PC-3 (cell line): ENCODE measurements at regions of chr10 and their contacts with region 1.

Region 1: GRCh38 chr10:32437334-32437733 is 8.6 kb upstream of the CCDC7 start:
- DNase-seq: peak; percentile 49
- ATAC-seq: peak; percentile 88
- H3K4me3 ChIP-seq: no peak overlapping the region
- H3K27ac ChIP-seq: no peak overlapping the region
- H3K4me1 ChIP-seq: no peaks in the 10 kb centered on the region
- H3K27me3 ChIP-seq: no peaks in the 10 kb centered on the region
- CTCF ChIP-seq: no peak

Region 2: DNA sequence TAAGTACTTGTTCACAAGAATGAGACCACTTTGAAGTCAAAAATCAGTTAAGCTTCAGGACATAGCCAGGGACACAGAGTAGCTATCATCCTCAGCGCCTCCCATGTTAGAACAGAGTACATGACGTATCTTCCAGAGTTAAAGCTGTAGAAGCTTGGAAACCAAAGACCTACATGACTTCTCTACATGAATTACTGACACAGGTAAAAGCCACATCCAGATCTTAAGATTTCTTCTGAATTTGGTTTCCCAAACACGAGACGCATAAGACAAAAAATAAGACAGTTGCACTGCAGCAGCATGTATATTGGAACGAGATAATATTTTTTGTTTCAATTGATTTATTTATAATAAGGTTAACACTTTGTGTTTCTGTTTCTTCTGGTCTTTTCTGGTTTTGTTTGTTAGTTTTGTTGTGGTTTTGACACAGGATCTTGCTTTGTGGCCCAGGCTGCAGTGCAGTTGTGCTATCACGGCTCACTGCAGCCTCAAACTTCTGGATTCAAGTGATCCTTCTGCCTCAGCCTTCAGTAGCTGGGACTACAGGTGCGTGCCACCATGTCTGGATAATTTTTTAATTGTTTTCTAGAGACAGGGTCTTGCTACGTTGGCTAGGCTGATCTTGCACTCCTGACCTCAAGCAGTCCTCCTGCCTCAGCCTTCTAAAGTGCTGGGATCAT is 80.1 kb before region 1 on chr10:
- CTCF ChIA-PET with region 1: no interaction called
- POLR2A ChIA-PET with region 1: interaction called, 16 read pairs
- intact Hi-C with region 1: no loop called
- DNase-seq: no peak
- ATAC-seq: no peak
- H3K4me3 ChIP-seq: no peak overlapping the region
- H3K27ac ChIP-seq: no peak overlapping the region
- H3K4me1 ChIP-seq: peaks cover 10% of the 10 kb centered on the region; the same call in 1 of the 2 replicates
- H3K27me3 ChIP-seq: no peaks in the 10 kb centered on the region
- CTCF ChIP-seq: no peak

Region 3: GRCh38 chr10:32489901-32490300 is 52.6 kb after region 1 on chr10:
- CTCF ChIA-PET with region 1: no interaction called
- POLR2A ChIA-PET with region 1: interaction called, 12 read pairs
- intact Hi-C with region 1: no loop called
- DNase-seq: no peak
- ATAC-seq: no peak
- H3K4me3 ChIP-seq: no peak overlapping the region
- H3K27ac ChIP-seq: no peak overlapping the region
- H3K4me1 ChIP-seq: no peaks in the 10 kb centered on the region
- H3K27me3 ChIP-seq: no peaks in the 10 kb centered on the region
- CTCF ChIP-seq: no peak